CD14-positive monocyte (primary cell): ENCODE measurements at regions of chr21 and their contacts with region 1.

Region 1: DNA sequence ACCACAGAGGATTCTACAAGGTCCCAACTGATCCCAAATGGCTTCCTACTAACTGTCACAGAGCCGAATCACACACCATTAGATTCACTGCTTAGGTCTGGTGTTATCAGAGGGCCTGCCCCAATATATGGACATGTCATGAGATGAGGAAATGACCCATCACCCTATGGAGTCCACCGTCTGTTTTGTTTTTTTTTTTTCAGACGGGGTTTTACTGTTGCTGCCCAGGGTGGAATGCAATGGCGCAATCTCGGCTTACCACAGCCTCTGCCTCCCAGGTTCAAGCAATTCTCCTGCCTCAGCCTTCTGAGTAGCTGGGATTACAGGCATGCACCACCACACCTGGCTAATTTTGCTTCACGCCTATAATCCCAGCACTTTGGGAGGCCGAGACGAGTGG is 83.8 kb upstream of the ETS2 start:
- DNase-seq: peak; percentile 18 to 69 (median 20)
- H3K4me3 ChIP-seq: no peak overlapping the region
- H3K4me3 Mint-ChIP-seq: no peak overlapping the region
- H3K27ac ChIP-seq: no peak overlapping the region
- H3K27ac Mint-ChIP-seq: peak overlapping the region in 1 of 7 donors; percentile 40
- H3K4me1 ChIP-seq: peaks cover 15 to 22% of the 10 kb centered on the region in 2 donors
- H3K4me1 Mint-ChIP-seq: peaks cover 23% of the 10 kb centered on the region
- H3K27me3 ChIP-seq: no peaks in the 10 kb centered on the region
- H3K27me3 Mint-ChIP-seq: peaks cover 0 to 3% (median 3%) of the 10 kb centered on the region in 3 donors
- CTCF ChIP-seq: no peak

Region 2: DNA sequence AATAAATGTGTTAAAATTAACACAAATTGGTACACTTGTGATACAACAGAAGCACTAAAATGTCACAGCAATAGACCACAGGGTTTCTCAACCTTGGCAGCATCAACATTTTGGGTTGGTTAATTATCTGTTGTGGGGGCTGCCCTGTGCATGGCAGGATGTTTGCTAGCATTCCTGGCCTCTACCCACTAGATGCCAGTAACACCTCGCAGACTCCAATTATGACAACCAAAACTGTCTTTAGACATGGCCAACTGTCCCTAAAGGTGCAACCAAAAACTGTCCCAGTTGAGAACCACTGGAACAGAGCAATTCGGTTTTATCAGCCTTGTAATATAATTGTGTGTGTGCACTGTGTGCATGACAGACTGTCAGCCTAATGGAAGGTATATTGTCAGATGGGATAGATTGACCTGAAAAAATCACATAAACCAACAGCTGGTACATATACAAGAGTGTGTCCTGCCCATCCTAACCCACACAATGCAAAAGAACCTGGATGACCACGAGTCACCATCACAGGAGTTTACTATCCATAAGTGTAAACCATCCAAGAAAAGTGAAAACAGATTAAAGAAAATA is 210.2 kb before region 1 on chr21:
- intact Hi-C with region 1: loop called in 1 of 2 experiments (anchors 10 kb)
- DNase-seq: no peak
- H3K4me3 ChIP-seq: no peak overlapping the region
- H3K4me3 Mint-ChIP-seq: no peak overlapping the region
- H3K27ac ChIP-seq: no peak overlapping the region
- H3K27ac Mint-ChIP-seq: no peak overlapping the region
- H3K4me1 ChIP-seq: peaks cover 9 to 11% of the 10 kb centered on the region in 2 donors
- H3K4me1 Mint-ChIP-seq: peaks cover 7% of the 10 kb centered on the region
- H3K27me3 ChIP-seq: no peaks in the 10 kb centered on the region
- H3K27me3 Mint-ChIP-seq: peaks cover 0 to 3% (median 2%) of the 10 kb centered on the region in 3 donors
- CTCF ChIP-seq: no peak

Region 3: DNA sequence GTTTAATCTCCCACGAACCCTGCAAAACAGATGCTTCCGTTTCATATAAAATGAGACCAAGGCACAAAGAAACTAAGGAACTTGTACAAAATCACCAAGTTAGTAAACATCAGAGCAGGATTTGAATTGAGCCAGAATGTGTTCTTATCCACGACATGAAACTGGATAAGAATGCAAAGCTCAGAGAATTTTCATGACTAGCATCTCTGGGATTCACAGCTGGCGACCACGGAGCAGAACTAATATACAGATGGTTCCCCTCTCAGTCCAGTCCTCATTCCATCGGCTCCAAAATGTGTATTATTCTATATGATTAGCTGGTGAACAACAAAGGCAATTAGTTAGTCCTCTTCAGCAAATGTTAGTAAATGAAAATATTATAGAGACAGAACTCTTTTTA is 151.4 kb before region 1 on chr21:
- intact Hi-C with region 1: no loop called
- DNase-seq: no peak
- H3K4me3 ChIP-seq: no peak overlapping the region
- H3K4me3 Mint-ChIP-seq: no peak overlapping the region
- H3K27ac ChIP-seq: no peak overlapping the region
- H3K27ac Mint-ChIP-seq: no peak overlapping the region
- H3K4me1 ChIP-seq: no peaks in the 10 kb centered on the region
- H3K4me1 Mint-ChIP-seq: no peaks in the 10 kb centered on the region
- H3K27me3 ChIP-seq: no peaks in the 10 kb centered on the region
- H3K27me3 Mint-ChIP-seq: peaks cover 0 to 2% (median 2%) of the 10 kb centered on the region in 3 donors
- CTCF ChIP-seq: no peak